ENCODE measurements at regions of chr7 and their contacts with region 1.

Region 1: DNA sequence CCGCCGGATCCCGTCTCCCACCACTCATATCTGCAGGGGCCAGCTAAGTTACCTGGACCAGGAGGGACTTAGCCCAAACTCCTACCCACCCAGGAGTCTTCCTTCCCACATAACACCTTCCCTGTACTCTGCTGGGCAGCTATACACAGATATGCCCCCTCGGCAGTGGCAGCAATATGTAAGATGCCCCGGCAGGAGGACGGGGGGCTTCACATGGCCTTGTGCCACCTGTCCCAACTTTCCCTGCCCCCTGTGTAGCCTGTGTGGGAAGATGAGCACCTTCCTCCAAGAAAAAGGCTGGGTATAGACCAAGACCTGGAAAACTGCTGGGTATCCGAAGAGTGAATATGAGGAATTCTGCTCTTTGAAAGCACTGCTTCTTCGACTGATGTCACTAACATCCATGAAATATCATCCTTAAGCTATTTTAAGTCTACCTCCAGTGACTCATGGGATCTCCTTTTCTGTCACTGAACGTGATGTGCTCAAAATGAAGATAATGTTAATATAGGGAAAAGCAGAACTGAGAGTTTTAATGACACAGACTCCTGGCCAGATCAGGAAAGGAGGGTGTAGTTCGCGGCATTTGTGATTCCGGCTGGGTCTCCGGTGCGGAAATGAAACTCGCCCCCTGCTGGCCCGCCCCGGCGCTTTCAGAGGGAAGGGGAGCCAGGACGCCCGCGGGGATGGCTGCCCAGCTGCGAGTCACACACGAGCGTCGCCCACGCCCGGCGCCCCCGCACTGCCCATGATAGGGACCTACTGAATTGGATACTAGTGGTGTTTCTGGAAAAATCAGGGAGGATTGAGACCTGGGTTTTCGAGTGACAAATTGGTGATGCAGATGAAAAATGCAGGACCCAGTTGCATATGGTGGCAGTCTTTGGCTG is 256.9 kb upstream of the NFE2L3 start:
- DNase-seq: peak; percentile 17
- H3K4me3 ChIP-seq: no peak overlapping the region
- H3K27ac ChIP-seq: no peak overlapping the region
- H3K4me1 ChIP-seq: peaks cover 27% of the 10 kb centered on the region
- H3K27me3 ChIP-seq: no peaks in the 10 kb centered on the region
- CTCF ChIP-seq: peak; percentile 46 to 65

Region 2: DNA sequence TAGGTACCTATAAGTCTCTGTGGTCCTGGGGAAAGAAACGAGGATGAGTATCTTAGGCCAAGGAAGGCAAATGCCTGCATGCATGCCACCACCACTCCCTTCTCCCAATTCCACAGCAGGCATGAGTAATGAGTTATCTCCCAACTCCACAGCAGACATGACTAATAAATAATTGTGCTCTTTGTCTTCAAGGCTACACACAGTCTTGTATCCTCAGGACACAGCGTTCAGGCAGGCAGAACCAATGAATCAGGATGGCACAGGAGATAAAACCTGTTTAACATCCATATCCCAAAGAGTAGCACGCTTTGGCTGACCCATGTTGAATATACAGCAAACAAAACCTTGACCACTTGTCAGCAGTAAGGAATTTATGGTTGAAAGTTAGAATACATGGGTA is 27.1 kb after region 1 on chr7:
- CTCF ChIA-PET with region 1: no interaction called
- dilution Hi-C with region 1: no loop called
- in situ Hi-C with region 1: no loop called
- intact Hi-C with region 1: no loop called
- DNase-seq: peak; percentile 86
- H3K4me3 ChIP-seq: no peak overlapping the region
- H3K27ac ChIP-seq: peak overlapping the region; percentile 23
- H3K4me1 ChIP-seq: peaks cover 21% of the 10 kb centered on the region
- H3K27me3 ChIP-seq: no peaks in the 10 kb centered on the region
- CTCF ChIP-seq: no peak

Region 3: GRCh38 chr7:26052721-26053120 is 157.6 kb after region 1 on chr7:
- CTCF ChIA-PET with region 1: no interaction called
- dilution Hi-C with region 1: no loop called
- in situ Hi-C with region 1: loop called in 1 of 2 experiments (anchors 5 kb)
- intact Hi-C with region 1: no loop called
- DNase-seq: peak; percentile 82
- H3K4me3 ChIP-seq: no peak overlapping the region
- H3K27ac ChIP-seq: no peak overlapping the region
- H3K4me1 ChIP-seq: peaks cover 11% of the 10 kb centered on the region
- H3K27me3 ChIP-seq: no peaks in the 10 kb centered on the region
- CTCF ChIP-seq: no peak

Region 4: DNA sequence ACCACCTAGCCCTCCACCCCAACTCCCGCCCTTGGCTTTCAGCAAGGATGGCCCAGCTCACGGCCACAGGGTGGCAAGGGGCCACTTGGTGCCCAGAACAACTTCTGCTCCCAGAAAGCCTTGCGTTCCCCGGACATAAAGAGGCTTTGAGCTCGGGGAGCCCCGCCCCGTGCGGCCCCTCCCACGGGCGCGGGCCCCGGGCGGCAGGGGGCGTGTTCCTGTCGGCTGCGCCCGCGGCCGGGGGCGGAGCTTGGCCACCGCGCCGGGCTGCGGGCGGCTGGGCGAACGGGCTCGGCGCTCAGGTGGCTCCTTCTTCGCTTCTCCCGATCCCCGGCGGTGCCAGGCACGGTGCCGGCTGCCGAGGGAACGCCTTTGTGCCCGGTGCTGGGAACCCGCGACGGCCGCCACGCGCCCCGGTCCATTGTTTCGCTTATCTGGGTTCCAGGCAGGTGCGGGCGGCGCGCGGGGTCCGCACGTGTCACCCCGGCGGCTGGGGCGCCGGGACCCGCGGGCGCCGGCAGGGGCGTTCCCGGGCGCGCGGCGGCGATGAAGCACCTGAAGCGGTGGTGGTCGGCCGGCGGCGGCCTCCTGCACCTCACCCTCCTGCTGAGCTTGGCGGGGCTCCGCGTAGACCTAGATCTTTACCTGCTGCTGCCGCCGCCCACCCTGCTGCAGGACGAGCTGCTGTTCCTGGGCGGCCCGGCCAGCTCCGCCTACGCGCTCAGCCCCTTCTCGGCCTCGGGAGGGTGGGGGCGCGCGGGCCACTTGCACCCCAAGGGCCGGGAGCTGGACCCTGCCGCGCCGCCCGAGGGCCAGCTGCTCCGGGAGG is 257.0 kb after region 1 on chr7 and contains the start of gene NFE2L3:
- CTCF ChIA-PET with region 1: no interaction called
- dilution Hi-C with region 1: loop called (anchors 5 kb)
- in situ Hi-C with region 1: no loop called
- intact Hi-C with region 1: no loop called
- DNase-seq: peak; percentile 65
- H3K4me3 ChIP-seq: peak within 1 kb of the TSS; percentile 30 to 65 (median 64)
- H3K27ac ChIP-seq: peak within 1 kb of the TSS; percentile 29
- H3K4me1 ChIP-seq: peaks cover 45% of the 10 kb centered on the region
- H3K27me3 ChIP-seq: no peaks in the 10 kb centered on the region
- CTCF ChIP-seq: peak in 1 of 2 donors; percentile 2
- total RNA-seq, gene NFE2L3: 5.4 to 8.3 TPM

Region 5: DNA sequence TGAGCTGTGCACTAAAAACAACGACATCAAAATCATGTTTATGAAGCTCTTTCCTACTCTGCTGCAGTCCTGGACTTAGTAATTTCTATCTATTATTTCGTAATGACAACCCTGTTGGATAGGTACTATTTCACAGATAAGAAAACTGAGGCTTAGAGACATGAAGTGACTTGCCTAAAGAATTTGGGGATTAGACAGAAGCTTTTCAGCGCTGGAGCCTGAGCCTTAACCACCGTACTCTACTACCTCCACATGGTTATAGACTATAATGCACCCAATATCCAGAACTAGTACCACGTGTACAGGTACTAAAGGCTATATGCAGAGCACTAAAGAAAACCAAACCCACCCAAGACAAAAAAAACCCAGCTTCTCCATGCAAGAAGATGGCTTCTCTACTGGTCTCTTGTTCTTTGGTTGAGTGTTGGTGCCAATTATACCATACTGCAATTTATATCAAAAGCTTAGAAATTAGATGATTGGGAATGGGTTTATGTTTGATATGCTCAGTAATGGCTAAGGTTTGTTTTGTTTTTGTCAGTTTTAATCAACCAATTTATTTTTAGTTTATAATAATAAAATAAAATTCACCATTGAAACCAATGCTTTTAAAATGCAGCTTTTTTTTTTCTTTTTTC is 390.0 kb after region 1 on chr7:
- CTCF ChIA-PET with region 1: no interaction called
- dilution Hi-C with region 1: no loop called
- in situ Hi-C with region 1: no loop called
- intact Hi-C with region 1: loop called (anchors 1 kb)
- DNase-seq: peak; percentile 47
- H3K4me3 ChIP-seq: no peak overlapping the region
- H3K27ac ChIP-seq: no peak overlapping the region
- H3K4me1 ChIP-seq: no peaks in the 10 kb centered on the region
- H3K27me3 ChIP-seq: no peaks in the 10 kb centered on the region
- CTCF ChIP-seq: peak; percentile 5 to 17

Region 6: GRCh38 chr7:26667500-26668133 is 772.5 kb after region 1 on chr7:
- CTCF ChIA-PET with region 1: no interaction called
- dilution Hi-C with region 1: no loop called
- in situ Hi-C with region 1: loop called (anchors 25 kb)
- intact Hi-C with region 1: no loop called
- DNase-seq: peak; percentile 86
- H3K4me3 ChIP-seq: no peak overlapping the region
- H3K27ac ChIP-seq: no peak overlapping the region
- H3K4me1 ChIP-seq: no peaks in the 10 kb centered on the region
- H3K27me3 ChIP-seq: no peaks in the 10 kb centered on the region
- CTCF ChIP-seq: peak; percentile 86 to 87